ENCODE measurements at regions of chr5 and their contacts with region 1.

Region 1: DNA sequence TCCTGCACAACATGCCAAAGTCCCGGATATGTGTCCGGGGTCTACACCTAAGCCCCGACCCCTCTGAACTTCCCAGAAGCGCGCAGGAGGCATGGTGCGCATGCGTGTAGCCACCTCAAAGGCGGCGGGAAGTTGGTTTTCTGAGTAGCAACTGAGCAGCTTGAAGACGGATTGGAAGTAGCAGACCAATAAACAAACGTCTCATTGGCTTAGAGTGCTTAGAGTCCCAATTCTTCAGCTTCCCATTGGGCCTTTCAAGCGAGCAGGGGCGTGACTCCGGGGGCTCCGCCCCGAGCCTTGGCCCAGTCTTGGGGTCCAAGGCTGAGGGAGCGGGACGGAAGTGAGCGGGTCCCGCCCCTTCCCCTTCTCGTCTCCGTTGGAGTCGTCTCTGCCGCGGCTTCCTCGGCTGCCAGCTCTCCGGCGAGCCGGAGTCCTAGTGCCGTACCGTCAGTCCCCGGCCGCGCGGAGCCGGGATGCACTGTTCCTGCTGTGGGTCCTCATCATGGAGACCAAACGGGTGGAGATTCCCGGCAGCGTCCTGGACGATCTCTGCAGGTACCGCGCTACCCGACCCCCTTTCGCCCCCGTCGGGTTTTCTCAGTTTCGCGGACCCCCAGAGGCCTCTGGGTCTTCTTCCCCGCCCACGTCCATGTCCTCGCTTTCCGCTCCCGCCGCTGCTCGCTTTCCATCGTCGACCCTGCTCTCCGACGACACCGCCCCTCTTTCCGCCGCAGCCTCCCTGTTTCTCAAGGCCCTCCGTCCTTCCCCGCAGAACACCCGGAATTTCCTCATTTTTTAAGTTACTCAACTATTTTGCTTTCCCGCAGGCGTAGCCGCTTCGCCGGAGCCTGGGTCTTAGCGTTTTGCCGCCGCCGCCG is at the start of gene DCP2:
- DNase-seq: peak; percentile 92 to 95
- ATAC-seq: peak; percentile 100
- H3K4me3 ChIP-seq: peak within 1 kb of the TSS; percentile 69 to 97 (median 92)
- H3K27ac ChIP-seq: peak within 1 kb of the TSS; percentile 84 to 92 (median 90)
- H3K4me1 ChIP-seq: peaks cover 33 to 34% of the 10 kb centered on the region in 2 donors
- H3K27me3 ChIP-seq: no peaks in the 10 kb centered on the region
- CTCF ChIP-seq: peak in 1 of 5 experiments; percentile 1
- POLR2A ChIP-seq: peak; percentile 72 to 82
- total RNA-seq, gene DCP2: 9.8 to 30.9 (median 27.2) TPM

Region 2: GRCh38 chr5:113520429-113520828 is 543.8 kb after region 1 on chr5:
- in situ Hi-C with region 1: loop called in 3 of 4 experiments (anchors 25 kb)
- intact Hi-C with region 1: loop called (anchors 5 kb)
- DNase-seq: no peak
- ATAC-seq: no peak
- H3K4me3 ChIP-seq: no peak overlapping the region
- H3K27ac ChIP-seq: no peak overlapping the region
- H3K4me1 ChIP-seq: peaks cover 17 to 27% of the 10 kb centered on the region in 2 donors
- H3K27me3 ChIP-seq: no peaks in the 10 kb centered on the region
- CTCF ChIP-seq: no peak
- POLR2A ChIP-seq: no peak

Region 3: GRCh38 chr5:113581388-113581787 is 604.7 kb after region 1 on chr5:
- in situ Hi-C with region 1: loop called in 1 of 4 experiments (anchors 25 kb)
- intact Hi-C with region 1: no loop called
- DNase-seq: no peak
- ATAC-seq: no peak
- H3K4me3 ChIP-seq: no peak overlapping the region
- H3K27ac ChIP-seq: no peak overlapping the region
- H3K4me1 ChIP-seq: no peaks in the 10 kb centered on the region
- H3K27me3 ChIP-seq: no peaks in the 10 kb centered on the region
- CTCF ChIP-seq: no peak
- POLR2A ChIP-seq: no peak